Activated CD4-positive, alpha-beta T cell treated with anti-CD3 and anti-CD28 coated beads for 36 hours (primary cell): ENCODE measurements at regions of chr13 and their contacts with region 1.

Region 1: GRCh38 chr13:40682449-40683240 is 16.2 kb upstream of the FOXO1 start:
- DNase-seq: no peak
- ATAC-seq: peak; percentile 44
- H3K4me3 Mint-ChIP-seq: no peak overlapping the region
- H3K27ac Mint-ChIP-seq: peak overlapping the region; percentile 66
- H3K4me1 Mint-ChIP-seq: peaks cover 16% of the 10 kb centered on the region
- H3K27me3 Mint-ChIP-seq: no peaks in the 10 kb centered on the region

Region 2: GRCh38 chr13:39684531-39685137 is 998.0 kb before region 1 on chr13:
- CTCF ChIA-PET with region 1: interaction called, 11 read pairs
- POLR2A ChIA-PET with region 1: no interaction called
- intact Hi-C with region 1: loop called (anchors 1 kb)
- DNase-seq: no peak
- ATAC-seq: no peak
- H3K4me3 Mint-ChIP-seq: no peak overlapping the region
- H3K27ac Mint-ChIP-seq: no peak overlapping the region
- H3K4me1 Mint-ChIP-seq: peaks cover 21% of the 10 kb centered on the region
- H3K27me3 Mint-ChIP-seq: no peaks in the 10 kb centered on the region

Region 3: GRCh38 chr13:39765801-39766463 is 916.7 kb before region 1 on chr13:
- CTCF ChIA-PET with region 1: interaction called, 7 read pairs
- POLR2A ChIA-PET with region 1: no interaction called
- intact Hi-C with region 1: loop called (anchors 1 to 5 kb)
- DNase-seq: peak; percentile 65
- ATAC-seq: peak; percentile 89
- H3K4me3 Mint-ChIP-seq: no peak overlapping the region
- H3K27ac Mint-ChIP-seq: no peak overlapping the region
- H3K4me1 Mint-ChIP-seq: peaks cover 12% of the 10 kb centered on the region
- H3K27me3 Mint-ChIP-seq: no peaks in the 10 kb centered on the region

Region 4: DNA sequence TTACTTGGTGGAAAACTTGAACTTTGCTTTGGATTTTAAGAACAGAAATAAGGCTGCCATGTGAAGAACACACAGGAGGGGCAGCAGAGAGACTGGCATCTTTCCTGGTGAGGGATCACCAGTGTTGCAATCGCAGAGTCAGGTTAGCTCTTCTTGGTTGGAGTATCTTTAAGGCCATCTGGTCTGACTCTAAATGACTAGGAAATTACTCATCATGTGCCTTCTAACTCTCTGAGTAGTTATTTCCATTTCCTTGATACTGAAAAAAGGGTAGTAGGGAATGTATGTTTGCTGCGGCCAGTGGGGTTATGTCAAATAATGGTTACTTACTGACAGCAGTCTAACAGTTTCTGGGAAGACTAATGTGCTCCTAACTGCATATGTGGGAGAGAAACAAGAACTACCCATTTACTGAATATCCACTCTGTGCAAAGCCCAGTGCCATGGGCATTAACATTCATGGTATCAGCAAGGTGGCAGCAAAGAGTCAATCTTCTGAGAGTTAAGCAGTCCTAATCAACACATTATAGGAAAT is 905.1 kb before region 1 on chr13:
- CTCF ChIA-PET with region 1: interaction called, 5 read pairs
- POLR2A ChIA-PET with region 1: no interaction called
- intact Hi-C with region 1: loop called in 1 of 2 experiments (anchors 5 kb)
- DNase-seq: peak; percentile 70
- ATAC-seq: peak; percentile 83
- H3K4me3 Mint-ChIP-seq: peak overlapping the region; percentile 5
- H3K27ac Mint-ChIP-seq: peak overlapping the region; percentile 96
- H3K4me1 Mint-ChIP-seq: peaks cover 54% of the 10 kb centered on the region
- H3K27me3 Mint-ChIP-seq: no peaks in the 10 kb centered on the region

Region 5: GRCh38 chr13:39942552-39943273 is 739.9 kb before region 1 on chr13:
- CTCF ChIA-PET with region 1: interaction called, 11 read pairs
- POLR2A ChIA-PET with region 1: no interaction called
- intact Hi-C with region 1: loop called (anchors 2 kb)
- DNase-seq: peak; percentile 85
- ATAC-seq: peak; percentile 98
- H3K4me3 Mint-ChIP-seq: no peak overlapping the region
- H3K27ac Mint-ChIP-seq: no peak overlapping the region
- H3K4me1 Mint-ChIP-seq: peaks cover 10% of the 10 kb centered on the region
- H3K27me3 Mint-ChIP-seq: no peaks in the 10 kb centered on the region

Region 6: DNA sequence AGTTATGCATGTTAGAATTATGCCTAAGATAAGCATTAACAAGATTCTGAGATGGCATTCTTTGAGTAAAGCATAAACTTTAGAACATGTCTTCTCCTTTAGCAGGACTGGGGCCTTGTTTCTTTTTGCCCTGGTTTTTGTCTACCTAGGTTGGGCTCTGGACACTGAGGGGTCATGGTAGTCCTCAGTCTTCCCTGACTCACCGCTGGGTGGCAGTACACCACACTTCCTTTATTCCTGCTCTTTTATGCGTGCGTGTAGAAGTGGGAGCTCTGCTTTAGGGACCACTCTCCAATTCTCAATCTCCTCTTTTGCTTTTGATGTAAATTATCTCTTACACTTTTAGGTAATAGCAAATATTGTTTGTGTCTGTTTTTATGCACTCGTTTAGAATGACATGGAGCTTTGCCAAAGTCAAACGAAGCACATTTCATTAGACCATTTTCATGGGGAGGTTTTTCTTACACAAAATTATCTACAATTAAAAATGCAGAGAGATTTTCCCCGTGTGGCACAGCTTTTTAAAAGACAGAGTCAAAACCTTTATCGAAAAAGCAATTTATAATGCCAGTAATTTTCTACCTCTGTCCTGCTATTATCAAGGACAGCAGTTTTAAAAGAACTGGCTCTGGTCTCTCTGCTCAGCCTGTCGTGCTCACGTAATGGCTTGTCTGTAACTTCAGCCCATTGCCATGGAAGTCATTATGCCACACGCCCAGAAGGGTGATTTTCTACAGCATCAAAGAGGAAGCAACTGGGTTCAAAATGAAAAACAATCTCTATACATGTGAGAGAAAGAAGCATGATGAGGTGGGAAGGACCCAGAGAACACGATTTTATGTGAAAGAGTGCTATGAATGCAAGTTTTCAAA is 613.2 kb before region 1 on chr13:
- CTCF ChIA-PET with region 1: interaction called, 20 read pairs
- POLR2A ChIA-PET with region 1: no interaction called
- intact Hi-C with region 1: loop called (anchors 1 kb)
- DNase-seq: peak; percentile 86
- ATAC-seq: peak; percentile 93
- H3K4me3 Mint-ChIP-seq: peak overlapping the region; percentile 26
- H3K27ac Mint-ChIP-seq: peak overlapping the region; percentile 80
- H3K4me1 Mint-ChIP-seq: peaks cover 31% of the 10 kb centered on the region
- H3K27me3 Mint-ChIP-seq: no peaks in the 10 kb centered on the region

Region 7: GRCh38 chr13:40206241-40207000 is 476.2 kb before region 1 on chr13:
- CTCF ChIA-PET with region 1: interaction called, 3 read pairs
- POLR2A ChIA-PET with region 1: no interaction called
- intact Hi-C with region 1: loop called in 1 of 2 experiments (anchors 2 kb)
- DNase-seq: peak; percentile 68
- ATAC-seq: peak; percentile 89
- H3K4me3 Mint-ChIP-seq: peak overlapping the region; percentile 58
- H3K27ac Mint-ChIP-seq: peak overlapping the region; percentile 99
- H3K4me1 Mint-ChIP-seq: peaks cover 64% of the 10 kb centered on the region
- H3K27me3 Mint-ChIP-seq: no peaks in the 10 kb centered on the region

Region 8: GRCh38 chr13:41352935-41353840 is 670.5 kb after region 1 on chr13:
- CTCF ChIA-PET with region 1: no interaction called
- POLR2A ChIA-PET with region 1: no interaction called
- intact Hi-C with region 1: no loop called
- DNase-seq: peak; percentile 55
- ATAC-seq: peak; percentile 54
- H3K4me3 Mint-ChIP-seq: no peak overlapping the region
- H3K27ac Mint-ChIP-seq: peak overlapping the region; percentile 78
- H3K4me1 Mint-ChIP-seq: peaks cover 55% of the 10 kb centered on the region
- H3K27me3 Mint-ChIP-seq: no peaks in the 10 kb centered on the region